ENCODE measurements at regions of chr17 and their contacts with region 1.

Region 1: GRCh38 chr17:60639019-60639330 is 38.7 kb upstream of the BCAS3 start:
- DNase-seq: no peak

Region 2: GRCh38 chr17:60577147-60577915 is 61.6 kb before region 1 on chr17:
- intact Hi-C with region 1: loop called (anchors 5 kb)
- DNase-seq: no peak

Region 3: DNA sequence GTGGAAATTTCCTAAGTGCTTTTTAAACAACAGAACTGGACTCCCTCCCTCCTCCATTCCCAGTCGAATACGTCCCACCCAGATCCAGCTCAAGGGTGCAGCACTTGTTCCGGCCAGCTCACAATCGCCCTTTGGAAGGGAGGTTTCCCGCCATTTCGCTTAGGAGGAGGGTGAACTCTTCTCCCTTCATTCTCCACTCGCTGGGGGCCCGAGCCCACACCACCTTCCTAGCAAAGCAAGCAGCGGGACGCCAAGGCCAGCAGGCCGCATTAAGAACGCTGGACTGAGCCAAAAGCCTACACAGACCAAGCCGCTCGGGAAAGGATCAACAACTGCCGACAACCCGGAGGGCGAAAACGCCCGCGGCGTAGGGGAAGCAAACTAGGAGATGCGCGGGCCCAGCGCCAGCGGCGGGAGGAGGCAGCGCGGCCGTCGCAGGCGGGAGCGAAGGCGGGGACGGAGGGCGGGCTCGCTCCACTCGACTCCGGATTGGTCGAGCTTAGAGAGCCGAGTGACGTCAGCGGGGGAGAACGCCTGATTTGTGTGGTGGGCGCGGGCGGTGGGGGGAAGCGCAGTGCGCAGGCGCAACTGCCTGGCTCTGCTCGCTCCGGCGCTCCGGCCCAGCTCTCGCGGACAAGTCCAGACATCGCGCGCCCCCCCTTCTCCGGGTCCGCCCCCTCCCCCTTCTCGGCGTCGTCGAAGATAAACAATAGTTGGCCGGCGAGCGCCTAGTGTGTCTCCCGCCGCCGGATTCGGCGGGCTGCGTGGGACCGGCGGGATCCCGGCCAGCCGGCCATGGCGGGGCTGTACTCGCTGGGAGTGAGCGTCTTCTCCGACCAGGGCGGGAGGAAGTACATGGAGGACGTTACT is 39.1 kb before region 1 on chr17 and contains the start of gene PPM1D:
- intact Hi-C with region 1: no loop called
- DNase-seq: peak; percentile 99
- total RNA-seq, gene PPM1D: 6.2 TPM

Measured in cardiac septum (tissue), 1 donor.